GM10248 (cell line): ENCODE measurements at regions of chr1 and their contacts with region 1.

Region 1: GRCh38 chr1:15788624-15789301 is 18.7 kb downstream of the UQCRHL start:
- DNase-seq: no peak
- CTCF ChIP-seq: no peak

Region 2: GRCh38 chr1:15734891-15735300 is 53.9 kb before region 1 on chr1:
- CTCF ChIA-PET with region 1: no interaction called
- POLR2A ChIA-PET with region 1: no interaction called
- DNase-seq: no peak
- CTCF ChIP-seq: no peak

Region 3: DNA sequence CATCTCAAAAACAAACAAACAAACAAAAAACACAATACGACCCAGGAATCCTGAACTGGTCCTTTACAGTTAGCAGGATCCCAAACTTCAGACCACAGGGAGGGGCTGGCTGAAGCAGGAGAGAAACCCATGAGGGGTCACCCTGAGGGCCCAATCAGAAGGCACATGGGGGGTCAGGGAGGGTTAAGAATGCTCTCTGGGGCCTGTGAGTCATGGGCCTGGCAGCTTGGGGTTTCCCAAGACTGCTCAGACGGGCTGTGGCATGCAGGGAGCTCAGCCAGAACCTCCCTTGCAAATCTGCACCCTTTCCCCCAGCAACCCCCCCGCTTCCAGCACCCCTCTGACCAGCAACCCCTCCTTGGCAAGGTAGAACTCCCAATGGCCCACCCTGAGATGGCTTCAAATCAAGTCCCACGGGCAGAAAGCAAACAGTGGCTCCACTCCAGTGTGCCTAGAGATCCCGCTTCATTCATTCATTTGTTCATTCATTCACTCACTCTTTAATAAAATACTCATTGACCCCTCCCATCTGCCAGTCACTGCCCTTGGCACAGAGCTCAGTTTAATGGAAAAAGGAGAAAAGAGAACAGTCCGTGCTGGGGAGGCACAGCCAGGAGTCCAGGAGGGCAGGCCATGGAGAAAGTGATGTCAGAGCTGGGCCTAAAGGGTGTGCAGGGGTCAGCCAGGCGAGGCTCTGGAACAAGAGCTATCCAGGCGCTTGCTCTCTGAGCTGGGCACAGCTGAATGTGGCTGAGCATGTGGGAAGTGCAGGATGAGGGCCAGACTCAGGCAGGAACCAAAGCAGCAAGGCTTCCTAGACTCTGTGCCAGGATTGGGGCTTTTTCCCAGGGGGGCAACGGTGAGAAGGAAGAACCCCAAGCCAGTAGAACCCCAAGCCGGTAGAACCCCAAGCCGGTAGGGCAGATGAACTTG is 10.5 kb after region 1 on chr1:
- CTCF ChIA-PET with region 1: interaction called, 10 read pairs
- POLR2A ChIA-PET with region 1: no interaction called
- DNase-seq: no peak
- CTCF ChIP-seq: no peak

Region 4: GRCh38 chr1:15994590-15995351 is 206.0 kb after region 1 on chr1:
- CTCF ChIA-PET with region 1: interaction called, 25 read pairs
- POLR2A ChIA-PET with region 1: no interaction called
- DNase-seq: peak; percentile 64
- CTCF ChIP-seq: peak; percentile 78

Region 5: GRCh38 chr1:16032388-16033103 is 243.8 kb after region 1 on chr1:
- CTCF ChIA-PET with region 1: interaction called, 16 read pairs
- POLR2A ChIA-PET with region 1: no interaction called
- DNase-seq: peak; percentile 90
- CTCF ChIP-seq: peak; percentile 96